Activated CD4-positive, alpha-beta T cell treated with anti-CD3 and anti-CD28 coated beads for 36 hours (primary cell): ENCODE measurements at regions of chr10 and their contacts with region 1.

Region 1: DNA sequence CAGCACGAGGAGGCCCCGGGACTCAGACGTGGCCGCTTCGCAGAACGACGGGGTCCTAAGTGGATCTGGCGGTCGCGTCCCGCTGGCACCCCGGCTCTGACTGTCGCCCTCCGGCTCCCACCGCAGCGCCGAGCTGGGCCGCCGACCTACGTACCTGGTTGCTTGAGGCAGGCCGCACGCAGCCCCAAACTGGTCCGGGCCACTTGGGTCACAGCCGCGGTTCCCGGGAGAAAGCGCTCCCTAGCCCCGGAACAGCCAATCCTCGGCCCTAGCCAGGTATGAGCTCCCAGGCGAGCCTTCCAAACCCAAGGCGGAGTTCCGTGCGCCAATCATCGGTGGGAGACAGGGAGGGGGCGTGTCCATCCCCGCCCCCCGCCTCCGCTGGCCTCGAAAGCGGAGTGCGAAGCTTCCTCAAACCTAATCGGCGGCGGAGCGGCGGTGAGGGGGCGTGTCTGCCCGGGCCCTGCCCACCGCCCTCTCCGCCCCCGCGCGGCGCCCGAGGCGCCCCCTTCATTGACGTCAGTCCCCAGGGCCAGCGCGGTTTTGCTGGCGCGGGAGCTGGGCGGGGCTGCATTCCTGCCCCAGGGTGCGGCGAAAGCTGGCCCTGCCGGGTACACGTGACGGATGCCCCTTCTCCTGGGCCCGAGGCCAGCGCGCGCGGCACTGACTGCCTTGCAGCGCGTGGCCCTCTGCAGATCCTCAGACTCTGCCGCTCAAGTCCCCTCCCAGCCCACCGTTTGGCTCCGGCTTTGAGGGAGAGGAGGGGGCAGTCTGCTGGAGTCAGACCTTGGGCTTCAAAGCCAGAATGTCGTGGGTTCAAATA is at the start of gene AVPI1:
- DNase-seq: peak; percentile 97
- ATAC-seq: peak; percentile 91
- H3K4me3 Mint-ChIP-seq: peak within 1 kb of the TSS; percentile 76
- H3K27ac Mint-ChIP-seq: peak within 1 kb of the TSS; percentile 51
- H3K4me1 Mint-ChIP-seq: peaks cover 17% of the 10 kb centered on the region
- H3K27me3 Mint-ChIP-seq: no peaks in the 10 kb centered on the region
- total RNA-seq, gene AVPI1: 2.1 to 2.2 TPM

Region 2: DNA sequence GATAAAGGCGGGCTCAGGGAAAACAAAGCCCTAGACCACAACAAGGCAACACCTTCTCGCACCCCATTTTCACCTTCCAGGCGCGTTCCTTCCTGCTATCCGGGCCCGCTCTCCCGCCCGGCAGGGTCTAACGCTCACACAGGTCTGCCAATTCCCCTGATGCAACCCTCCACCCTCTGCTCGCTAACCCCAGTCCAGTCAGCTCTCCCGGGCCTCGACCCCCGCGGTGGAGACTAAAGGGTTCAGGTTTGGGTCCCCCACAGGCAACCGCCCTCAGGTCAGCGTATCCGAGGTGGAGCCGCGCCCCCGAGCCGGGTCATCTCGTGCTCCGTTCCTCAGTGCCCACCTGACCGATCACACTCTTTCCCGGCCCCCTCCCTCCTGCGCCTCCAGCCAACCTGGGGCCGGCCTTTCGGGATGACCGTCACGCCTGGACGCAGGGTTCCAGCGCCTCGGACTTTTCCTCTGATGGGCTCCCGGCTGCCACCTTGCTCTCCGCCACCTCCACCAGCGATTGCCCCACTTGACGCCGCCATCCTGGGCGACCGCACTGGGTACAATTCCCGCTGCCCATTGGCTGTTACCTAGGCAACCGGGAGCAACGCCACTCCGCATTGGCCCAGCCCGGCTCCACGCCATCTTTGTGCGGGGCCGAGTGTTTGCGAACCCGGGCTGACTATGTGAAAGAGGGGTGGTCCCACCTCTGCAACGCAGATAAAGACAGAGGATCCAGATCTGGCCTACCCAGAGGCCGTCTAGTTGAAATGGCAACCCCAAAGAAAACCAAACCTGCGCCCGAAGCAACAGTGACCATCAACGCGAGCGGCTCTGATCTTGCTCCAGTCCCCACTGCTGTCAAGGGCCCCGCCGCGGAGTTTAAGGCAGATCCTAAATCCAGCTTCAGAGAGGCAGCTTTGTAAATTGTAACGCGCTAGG is 54.0 kb before region 1 on chr10 and contains the start of gene MORN4:
- CTCF ChIA-PET with region 1: interaction called, 3 read pairs
- POLR2A ChIA-PET with region 1: interaction called, 3 read pairs
- intact Hi-C with region 1: loop called in 1 of 2 experiments (anchors 1 kb)
- DNase-seq: peak; percentile 94
- ATAC-seq: peak; percentile 99
- H3K4me3 Mint-ChIP-seq: peak within 1 kb of the TSS; percentile 85
- H3K27ac Mint-ChIP-seq: peak within 1 kb of the TSS; percentile 85
- H3K4me1 Mint-ChIP-seq: peaks cover 16% of the 10 kb centered on the region
- H3K27me3 Mint-ChIP-seq: no peaks in the 10 kb centered on the region
- total RNA-seq, gene MORN4: 3.9 to 5.3 TPM

Region 3: DNA sequence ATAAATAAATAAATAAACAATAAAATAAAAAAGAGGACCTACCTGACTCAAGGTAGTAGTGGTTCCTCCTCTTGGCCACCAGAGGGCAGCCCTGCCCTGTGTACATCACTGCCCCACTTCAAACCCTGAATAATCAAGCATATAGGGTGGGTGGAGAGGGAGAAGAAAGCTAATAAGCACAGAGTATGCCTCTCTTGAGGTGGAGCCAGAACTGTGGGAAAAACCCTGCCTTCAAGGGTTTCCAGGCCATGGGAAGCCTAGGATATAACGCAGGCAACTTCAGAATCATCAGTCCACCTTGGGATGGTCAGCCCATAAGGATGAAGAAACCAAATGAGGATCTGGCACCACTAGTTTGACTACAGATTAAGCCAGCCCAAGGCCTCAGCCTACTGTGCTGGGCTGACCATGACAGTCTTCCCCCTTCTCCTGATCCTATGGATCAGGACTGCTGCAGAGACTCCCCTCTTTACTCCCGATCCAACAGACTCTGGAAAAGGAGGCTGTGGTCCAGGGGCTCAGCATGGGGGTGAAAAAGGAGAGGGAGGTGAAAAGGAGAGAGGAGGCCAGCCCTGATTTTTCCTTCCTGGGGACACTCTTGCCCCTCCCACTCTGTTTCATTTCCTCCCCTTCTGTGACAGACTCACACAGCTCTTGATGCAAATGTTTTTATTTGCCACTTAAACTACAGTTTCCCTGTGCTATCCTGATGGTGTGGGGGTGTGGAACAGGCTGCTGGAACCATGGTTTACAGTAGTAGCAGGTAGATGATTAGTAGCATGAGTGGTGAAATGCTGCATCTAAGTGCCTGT is 10.2 kb before region 1 on chr10:
- CTCF ChIA-PET with region 1: interaction called, 28 read pairs
- POLR2A ChIA-PET with region 1: no interaction called
- intact Hi-C with region 1: no loop called
- DNase-seq: peak; percentile 64
- ATAC-seq: peak; percentile 84
- H3K4me3 Mint-ChIP-seq: no peak overlapping the region
- H3K27ac Mint-ChIP-seq: no peak overlapping the region
- H3K4me1 Mint-ChIP-seq: peaks cover 5% of the 10 kb centered on the region
- H3K27me3 Mint-ChIP-seq: no peaks in the 10 kb centered on the region

Region 4: GRCh38 chr10:97714048-97714371 is 26.8 kb after region 1 on chr10:
- CTCF ChIA-PET with region 1: interaction called, 8 read pairs
- POLR2A ChIA-PET with region 1: interaction called, 3 read pairs
- intact Hi-C with region 1: loop called in 1 of 2 experiments (anchors 1 kb)
- DNase-seq: peak; percentile 74
- ATAC-seq: peak; percentile 85
- H3K4me3 Mint-ChIP-seq: peak overlapping the region; percentile 79
- H3K27ac Mint-ChIP-seq: peak overlapping the region; percentile 88
- H3K4me1 Mint-ChIP-seq: peaks cover 11% of the 10 kb centered on the region
- H3K27me3 Mint-ChIP-seq: peaks cover 19% of the 10 kb centered on the region

Region 5: DNA sequence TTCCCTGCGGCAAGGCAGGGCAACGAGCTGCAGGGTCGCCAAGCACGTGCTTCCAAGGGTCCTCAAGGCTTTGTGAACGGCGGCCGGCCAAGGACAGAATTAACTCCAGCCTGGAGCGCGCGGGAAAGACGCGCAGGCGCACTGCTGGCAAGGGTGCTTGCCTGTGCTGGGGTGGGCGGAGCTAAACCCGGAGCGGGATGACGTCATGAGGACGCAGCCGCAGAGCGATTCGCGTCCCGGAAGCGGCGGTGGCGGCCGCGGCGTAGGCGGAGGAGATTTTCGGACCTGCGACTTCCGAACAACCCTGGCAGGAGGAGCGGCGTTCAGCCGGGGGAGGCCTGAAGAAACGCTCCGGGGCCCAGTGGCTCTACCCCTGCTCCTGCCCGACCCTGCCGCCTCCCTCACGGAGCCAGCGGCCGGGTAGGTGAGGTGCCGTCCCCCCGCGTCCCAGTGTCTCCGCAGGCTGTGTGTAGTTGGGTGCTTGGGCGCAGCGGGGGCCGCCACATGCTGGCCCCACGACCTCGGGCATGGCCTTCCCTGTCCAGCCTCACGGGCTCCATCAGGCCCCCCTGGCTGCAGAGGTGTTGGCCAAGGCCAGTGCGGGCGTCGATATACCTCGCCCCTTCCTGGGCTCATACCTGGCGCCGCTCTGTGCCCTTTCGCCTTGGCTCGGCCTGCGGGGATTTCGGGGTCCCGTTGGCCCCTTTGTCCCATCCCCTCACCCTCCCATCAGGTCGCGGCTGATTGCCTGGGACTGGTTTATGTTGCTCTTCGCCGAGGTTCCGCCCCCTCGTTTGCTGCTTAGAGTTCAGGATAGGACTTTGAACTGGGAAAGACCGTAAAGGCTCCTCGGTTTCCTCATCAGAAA is 50.0 kb after region 1 on chr10 and contains the start of gene ZFYVE27:
- CTCF ChIA-PET with region 1: interaction called, 13 read pairs
- POLR2A ChIA-PET with region 1: interaction called, 8 read pairs
- intact Hi-C with region 1: loop called (anchors 1 kb)
- DNase-seq: peak; percentile 98
- ATAC-seq: peak; percentile 90
- H3K4me3 Mint-ChIP-seq: peak within 1 kb of the TSS; percentile 88
- H3K27ac Mint-ChIP-seq: peak within 1 kb of the TSS; percentile 93
- H3K4me1 Mint-ChIP-seq: peaks cover 45% of the 10 kb centered on the region
- H3K27me3 Mint-ChIP-seq: no peaks in the 10 kb centered on the region
- total RNA-seq, gene ZFYVE27: 20.2 to 22.6 TPM

Region 6: GRCh38 chr10:98134431-98135221 is 447.5 kb after region 1 on chr10 and contains the start of gene R3HCC1L:
- CTCF ChIA-PET with region 1: no interaction called
- POLR2A ChIA-PET with region 1: no interaction called
- intact Hi-C with region 1: loop called in 1 of 2 experiments (anchors 5 kb)
- DNase-seq: peak; percentile 97
- ATAC-seq: peak; percentile 95
- H3K4me3 Mint-ChIP-seq: peak within 1 kb of the TSS; percentile 86
- H3K27ac Mint-ChIP-seq: peak within 1 kb of the TSS; percentile 93
- H3K4me1 Mint-ChIP-seq: peaks cover 44% of the 10 kb centered on the region
- H3K27me3 Mint-ChIP-seq: no peaks in the 10 kb centered on the region
- total RNA-seq, gene R3HCC1L: 13.5 to 16.8 TPM